ENCODE measurements at regions of chr2 and their contacts with region 1.

Region 1: DNA sequence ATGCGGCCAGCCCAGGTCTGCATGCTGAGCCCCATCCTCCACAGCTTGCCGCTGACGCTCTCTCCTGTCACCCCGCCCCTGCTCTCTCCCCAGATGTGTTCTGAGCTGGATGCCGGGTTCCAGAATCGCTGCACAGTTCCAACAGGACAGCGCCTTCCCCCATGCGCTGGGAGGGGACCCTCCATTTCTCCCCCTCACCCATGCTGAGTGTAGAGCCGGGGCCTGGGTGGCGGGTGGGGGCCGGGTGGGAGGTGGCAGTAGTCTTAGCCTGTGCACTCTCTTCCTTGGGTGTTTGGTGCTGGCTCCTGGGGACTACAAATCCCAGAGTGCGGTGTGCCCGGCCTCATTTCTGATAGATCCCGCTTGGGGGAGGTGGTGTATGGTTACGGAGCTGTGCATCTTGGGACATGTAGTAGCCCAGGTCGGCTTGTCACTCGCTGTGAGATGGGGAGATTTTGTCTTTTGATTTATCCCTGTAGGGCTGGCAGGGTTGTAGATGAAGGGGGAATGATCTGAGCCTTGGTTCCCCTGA is 6.8 kb downstream of the DNAJB2 start:
- DNase-seq: no peak
- H3K4me3 ChIP-seq: no peak overlapping the region
- H3K4me3 Mint-ChIP-seq: no peak overlapping the region
- H3K27ac Mint-ChIP-seq: no peak overlapping the region
- H3K4me1 ChIP-seq: no peaks in the 10 kb centered on the region
- H3K4me1 Mint-ChIP-seq: no peaks in the 10 kb centered on the region
- H3K27me3 ChIP-seq: no peaks in the 10 kb centered on the region
- H3K27me3 Mint-ChIP-seq: no peaks in the 10 kb centered on the region
- CTCF ChIP-seq: no peak

Region 2: DNA sequence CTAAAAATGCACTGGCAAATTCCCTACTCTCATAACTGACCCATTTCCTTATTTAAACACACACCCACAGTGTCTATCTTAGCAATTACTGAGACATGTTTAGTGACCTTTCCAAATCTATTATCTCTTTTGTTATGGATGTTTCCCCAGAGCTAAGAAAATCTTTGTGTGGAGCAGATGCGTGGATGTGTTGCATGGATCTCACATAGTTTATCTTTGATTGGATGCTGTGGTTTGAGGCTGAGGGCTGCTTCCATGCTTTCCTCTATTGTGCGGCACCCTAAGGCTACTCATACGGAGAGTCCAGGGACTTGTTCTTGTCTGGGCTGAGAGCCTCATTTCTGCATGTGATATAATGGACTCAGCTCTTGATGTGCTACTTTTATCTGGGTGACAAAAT is 51.6 kb before region 1 on chr2:
- CTCF ChIA-PET with region 1: no interaction called
- POLR2A ChIA-PET with region 1: no interaction called
- intact Hi-C with region 1: no loop called
- DNase-seq: no peak
- H3K4me3 ChIP-seq: no peak overlapping the region
- H3K4me3 Mint-ChIP-seq: no peak overlapping the region
- H3K27ac Mint-ChIP-seq: no peak overlapping the region
- H3K4me1 ChIP-seq: 0 out of 2 replicates have a peak, but pooled peaks cover 4% of the 10 kb centered on the region
- H3K4me1 Mint-ChIP-seq: no peaks in the 10 kb centered on the region
- H3K27me3 ChIP-seq: no peaks in the 10 kb centered on the region
- H3K27me3 Mint-ChIP-seq: no peaks in the 10 kb centered on the region
- CTCF ChIP-seq: no peak

Region 3: DNA sequence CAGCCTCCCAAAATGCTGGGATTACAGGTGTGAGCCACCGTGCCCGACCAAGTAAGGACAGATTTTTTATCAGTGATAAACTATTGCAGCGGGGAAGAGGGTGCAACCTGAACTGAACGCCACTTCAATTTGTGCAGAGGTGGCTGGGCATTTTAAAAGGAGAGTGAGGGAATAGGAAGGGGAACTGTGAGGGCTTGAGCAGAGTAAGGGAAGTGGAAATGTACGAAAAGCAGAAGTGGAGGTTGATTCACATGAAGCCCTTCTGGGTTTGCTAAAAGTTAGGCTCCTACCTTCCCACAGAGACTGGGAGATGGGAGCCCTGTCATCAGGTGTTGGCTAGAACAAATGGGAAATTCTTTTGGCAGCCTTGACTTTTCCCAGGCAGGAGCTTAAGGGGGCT is 317.8 kb after region 1 on chr2:
- CTCF ChIA-PET with region 1: no interaction called
- POLR2A ChIA-PET with region 1: interaction called, 12 read pairs
- intact Hi-C with region 1: no loop called
- DNase-seq: no peak
- H3K4me3 ChIP-seq: no peak overlapping the region
- H3K4me3 Mint-ChIP-seq: no peak overlapping the region
- H3K27ac Mint-ChIP-seq: no peak overlapping the region
- H3K4me1 ChIP-seq: peaks cover under 1% of the 10 kb centered on the region; the same call in 1 of the 2 replicates
- H3K4me1 Mint-ChIP-seq: no peaks in the 10 kb centered on the region
- H3K27me3 ChIP-seq: no peaks in the 10 kb centered on the region
- H3K27me3 Mint-ChIP-seq: no peaks in the 10 kb centered on the region
- CTCF ChIP-seq: no peak

Measured in Caco-2 (cell line).